Activated CD4-positive, alpha-beta T cell treated with anti-CD3 and anti-CD28 coated beads, Interleukin-2, amount 10 ng/mL, durations not matched to agents 24 days and 14 days (primary cell): ENCODE measurements at regions of chr10 and their contacts with region 1.

Region 1: DNA sequence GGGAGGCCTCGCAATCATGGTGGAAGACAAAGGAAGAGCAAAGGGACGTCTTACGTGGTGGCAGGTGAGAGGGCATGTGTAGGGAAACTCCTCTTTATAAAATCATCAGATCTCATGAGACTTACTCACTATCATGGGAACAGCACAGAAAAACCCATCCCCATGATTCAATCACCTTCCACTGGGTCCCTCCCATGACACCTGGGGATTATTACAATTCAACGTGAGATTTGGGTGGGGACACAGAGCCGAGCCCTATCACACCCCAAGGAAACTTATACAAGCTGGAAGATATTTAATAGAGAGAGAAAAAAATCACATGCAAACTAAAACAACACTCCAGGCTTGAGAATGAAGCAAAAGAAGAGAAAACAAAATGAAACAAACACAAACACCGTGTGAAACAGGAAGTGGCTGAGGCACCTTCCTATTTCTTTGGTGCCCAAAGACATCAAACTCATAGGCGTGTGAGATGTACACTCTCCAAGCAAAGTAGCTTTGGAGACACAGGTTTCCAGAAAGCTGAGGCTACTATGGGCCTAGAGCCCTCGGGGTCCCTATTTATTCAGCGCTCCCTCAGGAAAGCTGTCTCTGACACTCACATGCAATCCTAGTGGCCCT is 97.2 kb downstream of the PRKCQ start:
- DNase-seq: peak; percentile 71
- H3K4me3 Mint-ChIP-seq: peak overlapping the region; percentile 31
- H3K27ac Mint-ChIP-seq: peak overlapping the region; percentile 58
- H3K4me1 Mint-ChIP-seq: peaks cover 46% of the 10 kb centered on the region
- H3K27me3 Mint-ChIP-seq: no peaks in the 10 kb centered on the region

Region 2: GRCh38 chr10:6239213-6239991 is 243.4 kb before region 1 on chr10:
- intact Hi-C with region 1: no loop called
- DNase-seq: peak; percentile 87
- H3K4me3 Mint-ChIP-seq: no peak overlapping the region
- H3K27ac Mint-ChIP-seq: peak overlapping the region; percentile 16
- H3K4me1 Mint-ChIP-seq: peaks cover 34% of the 10 kb centered on the region
- H3K27me3 Mint-ChIP-seq: no peaks in the 10 kb centered on the region

Region 3: DNA sequence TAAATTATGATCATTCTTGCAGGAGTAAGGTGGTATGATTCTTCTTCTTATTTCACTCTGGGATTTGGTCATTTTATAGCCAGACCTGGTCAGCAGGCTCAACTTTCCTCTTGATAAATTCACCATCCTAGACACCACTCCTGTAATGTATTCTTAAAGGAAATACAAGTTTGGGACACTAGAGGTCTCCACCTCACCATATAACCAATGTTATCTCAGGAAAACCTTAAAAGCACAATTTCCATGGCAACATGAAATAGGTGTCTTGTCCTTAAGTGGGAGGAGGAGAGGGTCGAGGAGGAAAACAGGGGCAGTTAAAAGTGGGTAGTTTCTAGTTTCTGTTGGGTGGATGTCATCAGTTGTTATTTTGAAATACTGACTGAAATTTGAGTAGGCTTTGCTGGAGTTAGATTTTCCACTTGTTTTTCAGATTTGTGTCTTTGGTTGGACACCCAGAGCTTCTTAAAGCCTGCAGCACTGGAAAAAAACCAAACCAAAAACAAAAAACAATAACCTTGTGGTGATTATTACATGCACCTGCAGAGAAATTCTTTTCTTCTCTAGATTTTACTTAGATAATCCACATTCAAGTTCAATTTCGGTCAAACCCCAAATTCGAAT is 65.8 kb before region 1 on chr10:
- intact Hi-C with region 1: no loop called
- DNase-seq: peak; percentile 79
- H3K4me3 Mint-ChIP-seq: no peak overlapping the region
- H3K27ac Mint-ChIP-seq: no peak overlapping the region
- H3K4me1 Mint-ChIP-seq: peaks cover 7% of the 10 kb centered on the region
- H3K27me3 Mint-ChIP-seq: no peaks in the 10 kb centered on the region

Region 4: DNA sequence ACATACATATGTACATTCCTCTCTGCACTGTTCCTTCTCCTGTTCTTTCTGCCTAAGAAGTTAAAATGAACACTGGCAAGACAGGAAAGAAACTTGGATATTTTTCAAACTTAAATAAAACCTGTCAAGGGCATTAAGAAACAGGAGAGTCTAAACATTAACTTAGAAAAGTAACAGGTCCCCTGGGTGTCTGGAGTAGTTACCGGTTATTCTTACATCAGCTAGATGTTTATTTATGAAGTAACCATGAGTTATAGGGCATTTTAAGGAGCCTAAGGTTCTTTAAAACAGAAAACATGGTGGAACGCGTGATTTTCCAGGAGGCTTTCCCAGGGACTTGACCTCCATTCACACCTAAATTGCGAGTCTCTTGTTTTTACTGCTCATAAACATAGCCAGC is 51.0 kb before region 1 on chr10:
- intact Hi-C with region 1: loop called (anchors 5 kb)
- DNase-seq: no peak
- H3K4me3 Mint-ChIP-seq: no peak overlapping the region
- H3K27ac Mint-ChIP-seq: peak overlapping the region; percentile 29
- H3K4me1 Mint-ChIP-seq: peaks cover 10% of the 10 kb centered on the region
- H3K27me3 Mint-ChIP-seq: no peaks in the 10 kb centered on the region